Right ventricle myocardium inferior (tissue), 1 donor: ENCODE measurements at regions of chr12 and their contacts with region 1.

Region 1: GRCh38 chr12:107679336-107679735 is 6.3 kb upstream of the PWP1 start:
- DNase-seq: no peak
- ATAC-seq: no peak

Region 2: DNA sequence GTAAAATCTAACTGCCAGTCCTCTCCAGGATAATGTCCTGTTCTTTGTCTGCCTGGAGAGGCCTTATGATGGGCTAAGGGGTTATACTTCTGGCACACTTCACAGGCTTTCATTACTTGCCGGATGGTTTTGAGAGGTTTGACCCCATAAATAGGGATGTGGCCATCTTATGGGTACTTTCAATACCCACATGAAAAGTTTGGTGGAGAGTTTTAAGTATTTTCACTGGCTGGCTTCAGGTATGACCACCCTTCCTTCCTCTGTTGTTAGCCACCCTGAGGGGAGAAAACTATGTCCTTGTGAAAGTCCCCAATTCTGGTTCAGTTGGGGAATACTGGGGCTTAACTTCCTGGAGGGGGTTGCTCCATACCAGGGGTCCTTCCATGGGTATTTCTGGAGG is 149.9 kb after region 1 on chr12:
- intact Hi-C with region 1: no loop called
- DNase-seq: no peak
- ATAC-seq: no peak

Region 3: GRCh38 chr12:107884769-107885694 is 205.7 kb after region 1 on chr12:
- intact Hi-C with region 1: loop called (anchors 5 kb)
- DNase-seq: no peak
- ATAC-seq: no peak

Region 4: GRCh38 chr12:108076556-108076955 is 397.2 kb after region 1 on chr12:
- intact Hi-C with region 1: no loop called
- DNase-seq: no peak
- ATAC-seq: no peak